Left cardiac atrium (tissue), 4 donors: ENCODE measurements at regions of chr5 and their contacts with region 1.

Region 1: GRCh38 chr5:176415952-176416924 is at the start of gene CLTB:
- DNase-seq: peak; percentile 93
- ATAC-seq: peak; percentile 92 to 97
- total RNA-seq, gene CLTB: 173 to 199 TPM

Region 2: DNA sequence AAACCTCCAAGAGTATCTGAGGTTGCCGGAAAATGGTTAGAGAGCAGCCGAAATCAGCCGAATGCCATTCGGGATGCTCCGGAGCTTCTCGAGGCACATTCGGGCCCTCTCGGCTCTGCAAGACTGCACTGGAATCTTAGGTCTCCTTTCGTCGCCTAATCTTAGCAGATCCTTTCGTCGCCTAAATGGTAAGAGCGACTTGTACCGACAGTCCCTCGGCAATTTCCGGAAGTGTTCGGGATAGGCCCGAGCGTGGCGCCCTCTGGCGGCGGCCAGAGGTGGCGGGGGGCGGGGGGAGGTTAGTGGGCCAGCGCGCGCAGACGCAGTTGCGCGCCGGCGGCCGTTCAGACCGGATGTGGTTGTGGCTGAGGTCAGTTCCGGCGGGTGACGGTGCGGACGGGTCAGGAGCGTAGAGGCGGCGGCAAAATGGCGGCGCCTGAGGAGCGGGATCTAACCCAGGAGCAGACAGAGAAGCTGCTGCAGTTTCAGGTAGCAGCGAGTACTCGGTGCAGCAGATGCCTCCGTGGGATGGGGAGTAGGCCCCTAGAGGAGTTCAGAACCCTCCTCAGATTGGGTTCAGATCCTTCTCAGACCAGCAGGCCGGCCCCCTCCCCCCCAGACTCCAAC is 31.9 kb after region 1 on chr5 and contains the start of gene FAF2:
- intact Hi-C with region 1: loop called in 1 of 2 experiments (anchors 2 kb)
- DNase-seq: peak; percentile 96
- ATAC-seq: peak; percentile 99
- total RNA-seq, gene FAF2: 15.3 to 23.3 TPM

Region 3: DNA sequence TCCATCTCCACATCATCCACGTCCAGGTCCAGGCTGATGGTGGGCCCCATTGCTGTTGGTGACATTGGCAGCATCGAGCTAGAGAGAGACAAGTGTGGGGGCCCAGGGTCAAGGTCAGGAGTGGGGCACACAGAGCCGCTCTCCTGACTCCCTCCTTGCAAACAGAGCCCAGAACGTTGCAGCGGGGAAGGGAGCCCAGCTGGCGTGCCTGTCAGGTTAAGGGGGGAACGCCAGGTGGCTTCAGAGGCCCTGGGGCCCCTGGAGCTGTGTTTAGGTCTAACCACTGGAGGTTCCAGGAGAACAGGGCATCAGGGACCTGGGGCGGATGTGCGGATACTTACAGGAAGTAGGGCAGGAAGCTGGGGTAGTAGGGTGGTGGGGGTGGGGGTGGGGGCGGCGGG is 113.5 kb after region 1 on chr5:
- intact Hi-C with region 1: loop called in 1 of 2 experiments (anchors 10 kb)
- DNase-seq: no peak
- ATAC-seq: no peak

Region 4: GRCh38 chr5:176543428-176544173 is 127.4 kb after region 1 on chr5:
- intact Hi-C with region 1: loop called in 1 of 2 experiments (anchors 5 kb)
- DNase-seq: peak; percentile 80
- ATAC-seq: peak; percentile 90 to 91

Region 5: DNA sequence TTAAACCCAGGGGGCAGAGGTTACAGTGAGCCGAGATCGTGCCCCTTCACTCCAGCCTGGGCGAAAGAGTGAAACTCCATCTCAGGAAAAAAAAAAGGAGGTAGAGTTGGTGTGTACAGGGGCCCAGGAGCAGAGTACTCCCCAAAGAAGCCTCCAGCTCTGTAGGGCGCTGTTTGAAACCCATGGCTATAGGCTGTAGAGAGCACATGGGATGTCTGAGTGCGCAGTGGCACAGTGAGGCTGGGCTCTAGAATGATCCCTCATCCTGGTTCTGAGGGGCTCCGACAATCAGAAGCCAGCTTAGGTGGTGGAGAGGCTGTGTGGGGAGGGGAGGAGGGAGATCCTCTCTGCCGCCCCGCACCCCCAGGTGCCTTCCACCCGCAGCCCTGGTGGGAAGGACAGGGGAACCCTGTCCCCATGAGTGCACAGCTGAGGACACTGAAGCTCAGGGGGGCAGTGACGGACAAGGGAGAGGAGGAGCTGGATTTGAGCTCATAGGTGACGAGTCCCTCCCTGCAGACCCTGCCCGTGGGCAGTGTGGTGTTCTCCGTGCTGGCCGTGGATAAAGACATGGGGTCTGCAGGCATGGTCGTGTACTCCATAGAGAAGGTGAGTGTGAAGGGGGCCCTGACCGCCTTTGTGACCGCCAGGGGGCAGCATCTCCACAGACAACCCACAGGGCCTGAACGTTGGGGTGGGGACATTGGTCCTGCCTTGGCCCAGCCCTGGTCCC is 157.5 kb after region 1 on chr5:
- intact Hi-C with region 1: loop called in 1 of 2 experiments (anchors 10 kb)
- DNase-seq: peak; percentile 75
- ATAC-seq: peak; percentile 87 to 88

Region 6: DNA sequence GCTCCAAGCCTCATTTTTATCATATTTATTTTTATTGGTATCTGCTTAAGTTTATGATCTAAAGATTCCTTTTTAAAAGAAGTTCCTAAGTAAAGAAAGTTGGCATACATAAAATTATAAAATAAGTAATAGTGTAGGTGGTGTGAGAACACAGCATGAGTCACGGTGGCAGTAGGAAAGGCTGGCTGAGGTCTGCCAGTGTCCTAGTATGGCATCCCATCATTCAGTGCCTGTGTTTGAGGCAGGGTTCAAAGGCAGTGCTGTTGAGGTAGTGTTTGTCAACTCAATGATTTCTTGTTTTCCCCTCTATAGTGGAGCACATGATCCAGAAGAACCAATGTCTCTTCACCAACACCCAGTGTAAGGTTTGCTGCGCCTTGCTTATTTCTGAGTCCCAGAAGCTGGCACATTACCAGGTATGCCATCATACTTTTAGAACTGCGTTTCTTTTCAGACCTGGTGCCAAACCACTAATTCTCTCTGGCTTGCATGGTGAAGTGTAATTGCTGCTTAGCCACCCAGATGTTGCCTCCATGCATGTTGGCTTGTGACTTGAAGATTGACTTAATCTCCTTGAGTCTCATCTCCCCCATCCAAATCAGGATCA is 624.7 kb after region 1 on chr5:
- intact Hi-C with region 1: no loop called
- DNase-seq: no peak
- ATAC-seq: peak in 1 of 2 donors; percentile 51